ENCODE measurements at regions of chr1 and their contacts with region 1.

Region 1: GRCh38 chr1:201348211-201348566 is 29.3 kb downstream of the TNNT2 start:
- DNase-seq: no peak
- ATAC-seq: peak; percentile 89
- H3K4me3 ChIP-seq: no peak overlapping the region
- H3K27ac ChIP-seq: no peak overlapping the region
- H3K4me1 ChIP-seq: no peaks in the 10 kb centered on the region
- H3K27me3 ChIP-seq: peaks cover 0 to 3% of the 10 kb centered on the region in 2 experiments; a peak in 2 of 4 replicates
- CTCF ChIP-seq: peak; percentile 72 to 78 (median 74)
- EP300 ChIP-seq: no peak
- POLR2A ChIP-seq: no peak
- RAD21 ChIP-seq: peak; percentile 58

Region 2: DNA sequence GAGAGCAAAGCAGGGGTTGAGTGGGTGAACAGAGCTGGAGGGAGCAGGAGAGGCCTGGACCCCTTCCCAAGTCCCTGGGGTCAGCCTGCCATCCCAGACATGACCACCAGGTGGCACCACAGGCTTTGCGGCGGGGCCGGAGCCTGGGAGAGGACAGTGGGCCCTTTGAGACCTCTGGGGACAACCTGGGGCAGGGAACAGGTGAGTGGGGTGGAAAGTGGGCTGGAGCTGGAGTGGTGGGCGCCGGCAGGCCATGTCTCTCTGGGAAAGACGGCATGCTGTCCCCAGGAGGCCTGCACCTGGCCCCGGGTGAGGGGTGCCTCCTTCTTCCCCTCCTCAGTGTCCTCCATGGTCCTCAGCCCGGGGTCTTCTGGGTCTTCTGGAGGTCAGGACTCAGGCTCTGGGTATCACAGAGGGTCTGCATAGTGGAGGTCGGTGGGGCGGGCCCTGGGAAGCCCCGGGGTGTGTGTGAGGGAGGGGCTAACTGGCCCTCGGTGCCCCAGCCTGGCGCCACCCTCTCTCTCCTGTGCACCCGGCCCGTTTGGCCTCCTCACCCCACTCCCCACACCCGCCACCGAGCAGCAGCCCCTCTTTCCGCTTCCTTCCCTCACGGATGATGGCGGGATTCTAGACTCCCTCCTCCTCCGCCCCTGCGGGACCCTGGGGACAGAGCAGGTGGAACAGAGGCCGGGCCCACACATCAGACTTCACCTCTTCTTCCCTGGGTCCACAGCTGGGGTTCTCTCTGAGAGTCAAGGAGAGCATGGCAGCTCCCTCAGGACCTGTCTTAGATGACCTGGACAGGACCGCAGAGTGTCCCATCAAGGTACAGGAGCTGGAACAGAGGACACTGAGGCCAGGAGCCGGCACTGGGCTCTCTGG is 93.3 kb before region 1 on chr1:
- CTCF ChIA-PET with region 1: interaction called, 9 read pairs
- POLR2A ChIA-PET with region 1: no interaction called
- RAD21 ChIA-PET with region 1: interaction called, 4 read pairs
- SMC1A ChIA-PET with region 1: interaction called, 4 read pairs
- in situ Hi-C with region 1: no loop called
- intact Hi-C with region 1: loop called (anchors 5 kb)
- DNase-seq: no peak
- ATAC-seq: peak; percentile 95
- H3K4me3 ChIP-seq: no peak overlapping the region
- H3K27ac ChIP-seq: no peak overlapping the region
- H3K4me1 ChIP-seq: no peaks in the 10 kb centered on the region
- H3K27me3 ChIP-seq: no peaks in the 10 kb centered on the region
- CTCF ChIP-seq: peak; percentile 94 to 99 (median 96)
- EP300 ChIP-seq: no peak
- POLR2A ChIP-seq: no peak
- RAD21 ChIP-seq: peak; percentile 89

Region 3: DNA sequence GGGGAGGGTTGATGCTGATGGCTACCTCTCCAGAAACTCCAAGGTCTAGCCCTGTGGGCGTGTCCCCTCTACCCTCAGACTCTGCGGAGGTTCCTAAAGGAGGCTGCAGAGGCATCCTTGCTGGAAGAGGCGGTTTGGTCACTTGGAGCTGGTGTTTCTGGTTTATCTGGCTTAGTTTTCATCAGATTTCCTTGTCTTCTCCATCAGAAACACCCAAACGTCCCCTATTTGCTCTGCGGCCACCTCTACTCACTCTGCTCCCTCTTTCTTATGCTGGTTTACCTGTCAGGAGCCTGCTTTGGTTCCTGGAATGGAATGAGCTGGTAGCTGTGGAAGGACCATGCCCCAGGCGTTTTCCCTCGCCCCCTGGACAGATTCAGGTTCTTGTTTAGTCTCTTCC is 62.3 kb before region 1 on chr1:
- CTCF ChIA-PET with region 1: interaction called, 4 read pairs
- POLR2A ChIA-PET with region 1: no interaction called
- RAD21 ChIA-PET with region 1: no interaction called
- SMC1A ChIA-PET with region 1: no interaction called
- in situ Hi-C with region 1: no loop called
- intact Hi-C with region 1: loop called (anchors 2 kb)
- DNase-seq: no peak
- ATAC-seq: no peak
- H3K4me3 ChIP-seq: no peak overlapping the region
- H3K27ac ChIP-seq: no peak overlapping the region
- H3K4me1 ChIP-seq: no peaks in the 10 kb centered on the region
- H3K27me3 ChIP-seq: peaks cover 5 to 11% of the 10 kb centered on the region in 2 experiments; a peak in 3 of 4 replicates
- CTCF ChIP-seq: no peak
- EP300 ChIP-seq: no peak
- POLR2A ChIP-seq: no peak
- RAD21 ChIP-seq: no peak

Region 4: DNA sequence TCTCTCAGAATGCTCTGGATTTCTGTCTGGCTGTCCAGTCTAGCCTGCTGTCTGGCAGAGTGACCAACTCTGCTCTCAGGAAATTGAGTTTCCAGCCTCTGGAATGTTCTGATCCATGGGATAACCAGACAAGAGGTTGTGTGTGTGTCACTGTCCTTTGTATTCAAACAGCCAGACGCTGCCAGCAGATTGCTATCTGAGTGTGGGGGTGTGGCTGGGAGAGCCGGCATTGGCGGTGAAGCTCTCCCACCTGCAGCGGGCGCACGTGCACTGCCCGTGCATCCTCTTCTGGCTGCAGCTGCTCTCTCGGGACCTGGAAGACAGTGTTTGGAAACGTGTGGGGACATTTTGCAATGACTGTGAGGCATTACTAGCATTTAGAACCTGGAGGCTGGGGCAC is 38.8 kb before region 1 on chr1:
- CTCF ChIA-PET with region 1: interaction called, 46 read pairs
- POLR2A ChIA-PET with region 1: no interaction called
- RAD21 ChIA-PET with region 1: interaction called, 5 read pairs
- SMC1A ChIA-PET with region 1: interaction called, 11 read pairs
- in situ Hi-C with region 1: no loop called
- intact Hi-C with region 1: no loop called
- DNase-seq: no peak
- ATAC-seq: peak; percentile 50; the same call in 2 of the 3 replicates
- H3K4me3 ChIP-seq: no peak overlapping the region
- H3K27ac ChIP-seq: no peak overlapping the region
- H3K4me1 ChIP-seq: no peaks in the 10 kb centered on the region
- H3K27me3 ChIP-seq: peaks cover 4 to 13% of the 10 kb centered on the region in 2 experiments; a peak in 3 of 4 replicates
- CTCF ChIP-seq: peak; percentile 21 to 43 (median 22); a peak in 3 of 6 replicates
- EP300 ChIP-seq: no peak
- POLR2A ChIP-seq: no peak
- RAD21 ChIP-seq: 0 out of 2 replicates have a peak, but pooled peaks have one; percentile 9

Region 5: GRCh38 chr1:201361652-201362504 is 13.7 kb after region 1 on chr1:
- CTCF ChIA-PET with region 1: interaction called, 36 read pairs
- POLR2A ChIA-PET with region 1: no interaction called
- RAD21 ChIA-PET with region 1: interaction called, 6 read pairs
- SMC1A ChIA-PET with region 1: interaction called, 11 read pairs
- in situ Hi-C with region 1: no loop called
- intact Hi-C with region 1: no loop called
- DNase-seq: no peak
- ATAC-seq: peak; percentile 92
- H3K4me3 ChIP-seq: no peak overlapping the region
- H3K27ac ChIP-seq: no peak overlapping the region
- H3K4me1 ChIP-seq: no peaks in the 10 kb centered on the region
- H3K27me3 ChIP-seq: peaks cover 3 to 4% of the 10 kb centered on the region in 2 experiments
- CTCF ChIP-seq: peak; percentile 71 to 85 (median 80)
- EP300 ChIP-seq: no peak
- POLR2A ChIP-seq: no peak
- RAD21 ChIP-seq: peak; percentile 71

Region 6: GRCh38 chr1:201385299-201385891 is 37.2 kb after region 1 on chr1:
- CTCF ChIA-PET with region 1: interaction called, 11 read pairs
- POLR2A ChIA-PET with region 1: interaction called, 4 read pairs
- RAD21 ChIA-PET with region 1: no interaction called
- SMC1A ChIA-PET with region 1: interaction called, 8 read pairs
- in situ Hi-C with region 1: no loop called
- intact Hi-C with region 1: no loop called
- DNase-seq: no peak
- ATAC-seq: peak; percentile 99
- H3K4me3 ChIP-seq: no peak overlapping the region
- H3K27ac ChIP-seq: no peak overlapping the region
- H3K4me1 ChIP-seq: no peaks in the 10 kb centered on the region
- H3K27me3 ChIP-seq: no peaks in the 10 kb centered on the region; a peak in 1 of 4 replicates
- CTCF ChIP-seq: peak; percentile 93 to 97 (median 96); a peak in 5 of 6 replicates
- EP300 ChIP-seq: no peak
- POLR2A ChIP-seq: no peak
- RAD21 ChIP-seq: peak; percentile 78

Measured in GM12878 (cell line).